Activated T-helper 1 cell treated with anti-CD3 and anti-CD28 coated beads, Interleukin-12 subunit alpha, Interleukin-12 subunit beta, Interleukin-2, Interleukin-4 antibody, amounts not matched to agents 30 ng/mL and 10 ng/mL and 1 ng/mL, durations not matched to agents 14 hours and 24 hours and 36 hours (primary cell): ENCODE measurements at regions of chr2 and their contacts with region 1.

Region 1: GRCh38 chr2:190408538-190409271 is 550 bp downstream of the MFSD6 start:
- DNase-seq: peak; percentile 66
- H3K4me3 Mint-ChIP-seq: peak overlapping the region; percentile 90
- H3K27ac Mint-ChIP-seq: peak overlapping the region; percentile 94
- H3K4me1 Mint-ChIP-seq: peaks cover 44% of the 10 kb centered on the region
- H3K27me3 Mint-ChIP-seq: no peaks in the 10 kb centered on the region

Region 2: DNA sequence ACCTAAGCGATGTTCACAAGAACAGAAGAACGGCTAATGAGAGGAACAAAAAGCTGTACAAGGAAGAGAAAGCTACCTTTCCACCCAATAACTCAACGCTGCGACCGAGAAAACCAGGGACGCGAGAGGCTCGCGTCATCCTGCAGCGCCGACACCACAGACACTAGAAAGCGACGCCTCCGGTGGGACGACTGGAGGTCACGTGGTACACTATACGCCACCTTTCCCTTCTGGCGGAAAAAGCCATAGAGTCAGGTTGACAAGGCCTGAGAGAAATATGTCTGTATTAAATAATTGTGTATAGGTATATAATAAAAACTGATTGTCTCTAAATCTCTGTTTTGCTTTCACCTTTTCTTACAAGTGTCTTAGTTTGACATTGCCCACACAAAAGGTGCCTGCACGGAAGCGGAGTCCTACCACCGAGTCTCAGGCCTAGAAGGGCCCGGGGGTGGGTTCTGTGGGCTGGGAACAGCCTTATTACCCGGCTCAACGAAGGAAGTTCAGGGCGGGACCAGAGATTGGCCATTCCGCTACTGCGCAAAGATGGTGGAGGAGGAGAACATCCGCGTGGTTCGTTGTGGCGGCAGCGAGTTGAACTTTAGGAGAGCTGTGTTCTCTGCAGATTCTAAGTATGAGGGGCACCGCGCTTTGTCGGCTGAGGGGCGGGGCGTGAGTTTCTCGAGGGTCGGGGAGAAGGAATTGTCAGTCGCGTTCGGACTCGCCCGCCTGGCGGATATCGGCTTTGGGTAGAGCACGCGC is 967.6 kb before region 1 on chr2 and contains the start of gene WDR75:
- intact Hi-C with region 1: loop called (anchors 10 kb)
- DNase-seq: peak; percentile 89
- H3K4me3 Mint-ChIP-seq: no peak within 1 kb of the TSS
- H3K27ac Mint-ChIP-seq: peak within 1 kb of the TSS; percentile 99
- H3K4me1 Mint-ChIP-seq: peaks cover 8% of the 10 kb centered on the region
- H3K27me3 Mint-ChIP-seq: peaks cover 3% of the 10 kb centered on the region
- total RNA-seq, gene WDR75: 108 and 112 TPM in 2 replicates

Region 3: GRCh38 chr2:189685540-189686229 is 723.0 kb before region 1 on chr2:
- intact Hi-C with region 1: no loop called
- DNase-seq: no peak
- H3K4me3 Mint-ChIP-seq: no peak overlapping the region
- H3K27ac Mint-ChIP-seq: no peak overlapping the region
- H3K4me1 Mint-ChIP-seq: peaks cover 8% of the 10 kb centered on the region
- H3K27me3 Mint-ChIP-seq: no peaks in the 10 kb centered on the region

Region 4: GRCh38 chr2:190334479-190335224 is 74.1 kb before region 1 on chr2:
- intact Hi-C with region 1: no loop called
- DNase-seq: no peak
- H3K4me3 Mint-ChIP-seq: no peak overlapping the region
- H3K27ac Mint-ChIP-seq: no peak overlapping the region
- H3K4me1 Mint-ChIP-seq: no peaks in the 10 kb centered on the region
- H3K27me3 Mint-ChIP-seq: peaks cover 34% of the 10 kb centered on the region

Region 5: GRCh38 chr2:190382851-190383250 is 25.9 kb before region 1 on chr2:
- intact Hi-C with region 1: loop called (anchors 2 kb)
- DNase-seq: peak; percentile 32
- H3K4me3 Mint-ChIP-seq: no peak overlapping the region
- H3K27ac Mint-ChIP-seq: no peak overlapping the region
- H3K4me1 Mint-ChIP-seq: peaks cover 9% of the 10 kb centered on the region
- H3K27me3 Mint-ChIP-seq: peaks cover 2% of the 10 kb centered on the region

Region 6: GRCh38 chr2:190511104-190511503 is 102.4 kb after region 1 on chr2:
- intact Hi-C with region 1: loop called (anchors 5 kb)
- DNase-seq: no peak
- H3K4me3 Mint-ChIP-seq: no peak overlapping the region
- H3K27ac Mint-ChIP-seq: no peak overlapping the region
- H3K4me1 Mint-ChIP-seq: peaks cover 29% of the 10 kb centered on the region
- H3K27me3 Mint-ChIP-seq: no peaks in the 10 kb centered on the region

Region 7: GRCh38 chr2:190648289-190649034 is 239.8 kb after region 1 on chr2:
- intact Hi-C with region 1: loop called (anchors 1 kb)
- DNase-seq: peak; percentile 84
- H3K4me3 Mint-ChIP-seq: peak overlapping the region; percentile 78
- H3K27ac Mint-ChIP-seq: peak overlapping the region; percentile 82
- H3K4me1 Mint-ChIP-seq: peaks cover 48% of the 10 kb centered on the region
- H3K27me3 Mint-ChIP-seq: no peaks in the 10 kb centered on the region

Region 8: DNA sequence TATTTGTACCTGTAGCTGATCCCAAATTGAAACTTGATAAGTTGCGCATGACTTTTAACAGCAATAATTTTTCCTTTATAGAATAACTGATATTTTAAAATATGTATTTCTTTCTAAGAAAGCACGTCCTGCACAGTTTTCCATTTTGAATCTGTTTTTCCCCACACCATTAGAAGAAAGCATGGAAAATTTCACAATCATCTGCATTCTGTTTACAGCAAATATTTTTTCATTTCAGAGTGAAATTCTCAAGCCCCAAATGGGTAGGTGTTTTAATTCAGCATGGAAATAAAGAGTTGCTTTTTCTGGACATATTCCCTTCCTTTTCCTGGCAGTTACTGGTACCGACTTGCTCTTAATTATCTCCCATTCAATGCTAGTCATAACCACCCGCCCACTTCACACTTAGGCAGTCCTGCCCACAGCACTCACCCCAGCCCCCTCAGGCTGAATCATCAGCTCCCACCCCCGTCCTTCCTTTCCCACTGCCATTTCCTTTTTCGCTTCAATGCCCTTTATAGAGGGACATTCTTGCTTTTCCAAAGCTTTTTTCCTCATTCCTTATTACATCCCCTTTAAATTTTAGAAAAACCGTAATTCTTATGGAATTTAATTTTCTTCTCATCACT is 382.8 kb after region 1 on chr2:
- intact Hi-C with region 1: loop called (anchors 10 kb)
- DNase-seq: no peak
- H3K4me3 Mint-ChIP-seq: peak overlapping the region; percentile 19
- H3K27ac Mint-ChIP-seq: peak overlapping the region; percentile 74
- H3K4me1 Mint-ChIP-seq: peaks cover 76% of the 10 kb centered on the region
- H3K27me3 Mint-ChIP-seq: no peaks in the 10 kb centered on the region

Region 9: GRCh38 chr2:191013932-191014652 is 605.4 kb after region 1 on chr2 and contains the start of gene STAT1:
- intact Hi-C with region 1: loop called (anchors 5 kb)
- DNase-seq: peak; percentile 97
- H3K4me3 Mint-ChIP-seq: no peak within 1 kb of the TSS
- H3K27ac Mint-ChIP-seq: no peak within 1 kb of the TSS
- H3K4me1 Mint-ChIP-seq: peaks cover 49% of the 10 kb centered on the region
- H3K27me3 Mint-ChIP-seq: no peaks in the 10 kb centered on the region
- total RNA-seq, gene STAT1: 129 and 136 TPM in 2 replicates